Naive thymus-derived CD4-positive, alpha-beta T cell (primary cell): ENCODE measurements at regions of chr10 and their contacts with region 1.

Region 1: GRCh38 chr10:9342885-9343570 is 1288.5 kb downstream of the GATA3 start:
- DNase-seq: peak in 6 of 9 donors; percentile 21 to 55 (median 39)
- ATAC-seq: no peak
- H3K4me3 ChIP-seq: no peak overlapping the region
- H3K4me3 Mint-ChIP-seq: no peak overlapping the region
- H3K27ac ChIP-seq: no peak overlapping the region
- H3K27ac Mint-ChIP-seq: no peak overlapping the region
- H3K4me1 ChIP-seq: no peaks in the 10 kb centered on the region
- H3K4me1 Mint-ChIP-seq: peaks cover 0 to 17% (median 13%) of the 10 kb centered on the region in 7 donors
- H3K27me3 ChIP-seq: no peaks in the 10 kb centered on the region
- H3K27me3 Mint-ChIP-seq: peaks cover 0 to 8% (median 4%) of the 10 kb centered on the region in 5 donors

Region 2: GRCh38 chr10:10677479-10677878 is 1334.5 kb after region 1 on chr10:
- CTCF ChIA-PET with region 1: no interaction called
- POLR2A ChIA-PET with region 1: no interaction called
- intact Hi-C with region 1: loop called in 1 of 2 experiments (anchors 2 kb)
- DNase-seq: no peak
- ATAC-seq: peak; percentile 64
- H3K4me3 ChIP-seq: no peak overlapping the region
- H3K4me3 Mint-ChIP-seq: no peak overlapping the region
- H3K27ac ChIP-seq: no peak overlapping the region
- H3K27ac Mint-ChIP-seq: no peak overlapping the region
- H3K4me1 ChIP-seq: no peaks in the 10 kb centered on the region
- H3K4me1 Mint-ChIP-seq: no peaks in the 10 kb centered on the region
- H3K27me3 ChIP-seq: no peaks in the 10 kb centered on the region
- H3K27me3 Mint-ChIP-seq: peaks cover 3 to 17% (median 11%) of the 10 kb centered on the region in 5 donors